Activated CD8-positive, alpha-beta T cell treated with anti-CD3 and anti-CD28 coated beads for 36 hours (primary cell): ENCODE measurements at regions of chr6 and their contacts with region 1.

Region 1: GRCh38 chr6:44655412-44656342 is 268.2 kb downstream of the CDC5L start:
- DNase-seq: peak; percentile 84
- ATAC-seq: peak; percentile 94
- H3K4me3 Mint-ChIP-seq: no peak overlapping the region
- H3K27ac Mint-ChIP-seq: peak overlapping the region; percentile 67
- H3K4me1 Mint-ChIP-seq: peaks cover 7% of the 10 kb centered on the region
- H3K27me3 Mint-ChIP-seq: peaks cover 3% of the 10 kb centered on the region
- CTCF ChIP-seq: peak; percentile 95

Region 2: DNA sequence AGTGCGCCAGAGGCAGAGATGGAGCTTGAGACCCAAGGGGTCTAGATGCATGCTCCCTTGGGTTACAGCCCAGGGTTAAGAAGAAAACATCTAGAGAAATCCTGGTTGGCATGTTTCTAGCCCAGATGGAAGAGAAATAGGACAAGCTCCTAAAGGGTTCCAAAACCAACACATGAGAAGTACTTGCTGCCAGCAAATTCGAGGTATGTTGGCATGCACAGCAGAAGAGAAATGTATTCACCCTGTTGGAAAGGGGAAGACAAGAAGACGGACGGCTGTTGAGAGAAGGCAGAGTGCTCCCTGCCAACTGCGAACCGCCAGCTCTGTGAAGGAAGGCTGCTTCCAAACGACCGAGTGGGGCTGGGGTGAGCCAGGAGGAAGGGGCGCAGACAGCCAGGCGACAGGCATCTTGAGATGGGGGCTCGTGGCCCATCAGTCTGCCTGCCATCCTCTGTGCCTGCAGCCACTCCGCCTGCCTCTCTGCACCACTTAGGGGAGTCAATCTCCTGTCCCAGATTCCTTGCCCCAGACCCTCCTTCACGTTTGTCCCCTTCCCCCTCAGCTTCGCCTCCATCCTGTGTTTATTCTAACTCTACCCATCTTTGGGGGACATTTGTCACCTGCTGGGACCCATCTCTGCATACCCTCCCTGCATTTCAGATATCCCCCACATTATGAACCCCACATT is 19.0 kb before region 1 on chr6:
- CTCF ChIA-PET with region 1: interaction called, 10 read pairs
- POLR2A ChIA-PET with region 1: interaction called, 3 read pairs
- intact Hi-C with region 1: no loop called
- DNase-seq: no peak
- ATAC-seq: no peak
- H3K4me3 Mint-ChIP-seq: no peak overlapping the region
- H3K27ac Mint-ChIP-seq: no peak overlapping the region
- H3K4me1 Mint-ChIP-seq: peaks cover 16% of the 10 kb centered on the region
- H3K27me3 Mint-ChIP-seq: peaks cover 3% of the 10 kb centered on the region
- CTCF ChIP-seq: no peak

Region 3: GRCh38 chr6:44667668-44668390 is 12.2 kb after region 1 on chr6:
- CTCF ChIA-PET with region 1: interaction called, 13 read pairs
- POLR2A ChIA-PET with region 1: interaction called, 3 read pairs
- intact Hi-C with region 1: no loop called
- DNase-seq: peak; percentile 46
- ATAC-seq: no peak
- H3K4me3 Mint-ChIP-seq: no peak overlapping the region
- H3K27ac Mint-ChIP-seq: no peak overlapping the region
- H3K4me1 Mint-ChIP-seq: peaks cover 3% of the 10 kb centered on the region
- H3K27me3 Mint-ChIP-seq: no peaks in the 10 kb centered on the region
- CTCF ChIP-seq: peak; percentile 41

Region 4: GRCh38 chr6:45421709-45422502 is 766.2 kb after region 1 on chr6:
- CTCF ChIA-PET with region 1: interaction called, 11 read pairs
- POLR2A ChIA-PET with region 1: no interaction called
- intact Hi-C with region 1: loop called (anchors 5 kb)
- DNase-seq: peak; percentile 71
- ATAC-seq: peak; percentile 25
- H3K4me3 Mint-ChIP-seq: peak overlapping the region; percentile 94
- H3K27ac Mint-ChIP-seq: peak overlapping the region; percentile 95
- H3K4me1 Mint-ChIP-seq: peaks cover 29% of the 10 kb centered on the region
- H3K27me3 Mint-ChIP-seq: no peaks in the 10 kb centered on the region
- CTCF ChIP-seq: no peak